GM10248 (cell line): ENCODE measurements at regions of chr20 and their contacts with region 1.

Region 1: GRCh38 chr20:63056236-63056948 is 49.6 kb upstream of the BHLHE23 start:
- DNase-seq: peak; percentile 78
- CTCF ChIP-seq: peak; percentile 77

Region 2: GRCh38 chr20:63023071-63023935 is 33.1 kb before region 1 on chr20:
- CTCF ChIA-PET with region 1: no interaction called
- POLR2A ChIA-PET with region 1: no interaction called
- DNase-seq: no peak
- CTCF ChIP-seq: no peak

Region 3: DNA sequence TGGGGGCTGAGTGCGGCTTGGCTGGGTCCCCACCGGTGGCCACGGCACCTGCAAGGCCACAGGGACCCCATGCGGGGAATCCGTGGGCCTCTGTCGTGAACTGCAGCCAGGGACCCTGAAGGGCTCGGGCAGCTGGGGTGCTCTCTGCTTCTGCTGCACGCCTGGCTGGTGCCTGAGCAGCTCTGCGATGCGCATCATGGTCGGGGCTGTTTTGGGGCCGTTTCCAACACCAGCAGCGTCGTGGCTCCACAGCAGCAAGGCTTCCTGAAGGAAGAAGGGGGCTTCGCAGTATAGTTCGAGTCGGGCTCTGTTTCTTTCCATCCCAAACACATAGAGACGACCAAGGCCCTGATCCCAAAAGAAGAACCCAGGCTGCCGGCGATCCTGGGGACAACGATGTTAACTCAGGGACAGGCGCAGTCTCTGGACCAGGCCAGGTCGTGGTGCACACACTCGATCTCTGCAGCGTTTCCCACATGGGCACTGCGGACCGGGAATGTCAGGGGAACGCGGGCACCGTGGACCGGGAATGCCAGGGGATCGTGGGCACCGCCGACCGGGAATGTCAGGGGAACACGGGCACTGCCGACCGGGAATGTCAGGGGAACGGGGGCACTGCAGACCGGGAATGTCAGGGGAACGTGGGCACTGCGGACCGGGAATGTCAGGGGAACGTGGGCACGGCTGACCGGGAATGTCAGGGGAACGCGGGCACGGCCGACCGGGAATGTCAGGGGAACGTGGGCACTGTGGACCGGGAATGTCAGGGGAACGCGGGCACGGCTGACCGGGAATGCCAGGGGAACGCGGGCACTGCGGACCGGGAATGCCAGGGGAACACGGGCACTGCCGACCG is 12.8 kb before region 1 on chr20:
- CTCF ChIA-PET with region 1: interaction called, 14 read pairs
- POLR2A ChIA-PET with region 1: no interaction called
- DNase-seq: no peak
- CTCF ChIP-seq: no peak

Region 4: DNA sequence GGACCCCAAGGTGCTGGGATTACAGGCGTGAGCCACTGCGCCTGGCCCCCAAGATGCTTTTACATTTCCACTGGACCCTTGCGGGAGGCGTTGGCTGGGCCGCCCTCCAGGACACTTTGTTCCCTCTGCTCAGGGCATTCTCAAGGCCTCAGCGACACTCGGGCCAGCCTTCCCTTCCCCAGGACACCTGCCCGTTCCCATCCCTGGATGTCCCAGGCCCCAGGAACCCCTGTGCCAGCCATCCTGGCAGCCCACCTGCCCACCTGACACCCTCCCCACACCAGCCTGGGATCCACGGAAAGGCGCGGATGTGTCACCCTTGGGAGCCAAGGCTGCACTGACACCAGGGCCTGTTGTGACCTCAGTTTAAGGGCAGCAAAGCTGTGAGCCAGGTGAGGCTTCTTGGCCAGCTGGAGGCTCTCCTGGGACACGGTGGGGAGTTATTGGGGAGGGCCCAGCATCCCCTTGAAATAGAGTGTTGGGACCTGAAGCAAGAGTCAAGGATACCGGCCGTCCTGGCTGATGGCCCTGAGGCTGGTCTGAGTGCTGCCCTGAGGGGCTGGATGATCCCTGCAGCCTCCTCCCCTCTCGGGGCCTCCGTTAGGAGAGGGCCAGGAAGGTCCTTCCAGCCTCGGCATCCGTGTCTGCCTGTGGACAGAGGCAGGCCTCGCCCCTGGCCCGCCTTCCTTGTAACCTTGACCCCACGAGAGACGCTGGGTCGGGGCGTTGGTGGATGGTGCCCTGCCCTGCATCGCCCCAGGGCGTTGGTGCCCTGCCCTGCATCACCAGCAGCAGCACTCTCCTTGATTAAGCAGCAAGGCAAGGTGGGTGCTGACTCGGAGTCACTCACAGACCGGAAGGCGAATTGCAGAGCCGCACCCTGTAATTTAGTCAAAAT is 34.5 kb after region 1 on chr20:
- CTCF ChIA-PET with region 1: no interaction called
- POLR2A ChIA-PET with region 1: no interaction called
- DNase-seq: no peak
- CTCF ChIP-seq: no peak

Region 5: DNA sequence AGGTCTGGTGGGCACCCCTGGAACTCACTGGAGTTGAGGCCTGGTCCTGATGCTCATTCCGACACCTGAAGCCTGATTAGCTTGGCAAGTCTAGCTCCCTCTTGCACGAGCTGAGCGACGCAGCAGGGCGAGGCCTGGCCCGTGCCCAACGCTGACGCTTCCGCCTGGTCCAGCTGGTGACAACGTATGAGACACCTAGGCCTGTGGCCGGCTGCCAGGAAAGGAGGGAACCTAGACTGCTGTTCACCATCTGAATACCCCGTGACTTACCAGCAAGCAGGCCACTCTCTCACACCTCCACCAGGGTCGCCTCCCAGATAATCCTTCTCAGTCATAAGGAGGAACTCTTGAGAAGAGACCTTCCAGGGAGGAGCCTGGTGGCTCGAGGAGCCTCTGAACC is 135.0 kb after region 1 on chr20:
- CTCF ChIA-PET with region 1: no interaction called
- POLR2A ChIA-PET with region 1: no interaction called
- DNase-seq: no peak
- CTCF ChIP-seq: no peak

Region 6: DNA sequence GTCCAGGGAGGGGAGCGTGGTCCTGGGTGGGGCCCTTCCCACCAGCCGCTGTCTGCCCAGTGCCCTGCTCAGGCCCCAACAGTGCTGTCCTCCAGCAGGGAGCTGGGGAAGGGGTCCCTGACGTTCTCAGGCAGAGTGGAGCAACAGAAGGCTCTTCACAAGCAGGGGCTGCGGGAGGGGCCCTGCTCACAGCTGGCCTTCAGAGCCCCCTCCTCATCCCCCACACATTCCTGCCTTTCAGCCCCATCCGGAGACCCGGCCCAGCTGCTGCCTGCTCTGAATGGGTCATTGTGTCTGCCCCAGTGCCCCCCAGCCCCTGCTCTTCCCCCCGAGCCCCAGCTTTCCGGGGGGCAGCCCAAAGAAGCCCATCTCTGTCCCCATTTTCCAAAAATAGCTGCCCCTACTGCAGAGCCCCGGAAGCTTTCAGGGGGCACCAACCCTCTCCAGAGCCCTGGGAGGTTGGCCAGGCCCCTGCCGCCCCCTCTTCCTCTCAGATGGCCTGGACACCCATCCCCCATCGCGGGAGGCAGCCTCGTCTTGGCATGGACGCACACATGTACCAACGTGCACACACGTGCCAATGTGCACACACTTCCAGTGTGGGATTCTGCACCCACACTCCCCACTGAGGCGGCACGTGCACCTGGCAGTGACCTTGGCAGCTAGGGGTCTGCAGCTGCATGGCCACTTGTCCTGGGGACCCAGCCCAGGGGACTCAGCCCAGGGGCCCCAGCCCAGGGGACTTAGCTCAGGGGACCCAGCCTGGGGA is 240.3 kb after region 1 on chr20:
- CTCF ChIA-PET with region 1: no interaction called
- POLR2A ChIA-PET with region 1: no interaction called
- DNase-seq: no peak
- CTCF ChIP-seq: no peak